Ascending aorta (tissue), 2 donors: ENCODE measurements at regions of chr3 and their contacts with region 1.

Region 1: GRCh38 chr3:113019182-113020137 is 28.7 kb downstream of the GTPBP8 start:
- DNase-seq: peak; percentile 51 to 95
- H3K4me3 ChIP-seq: peak overlapping the region; percentile 75 to 76
- H3K27ac ChIP-seq: peak overlapping the region; percentile 93 to 95
- H3K4me1 ChIP-seq: peaks cover 9 to 13% of the 10 kb centered on the region in 2 donors
- H3K27me3 ChIP-seq: no peaks in the 10 kb centered on the region
- CTCF ChIP-seq: no peak

Region 2: DNA sequence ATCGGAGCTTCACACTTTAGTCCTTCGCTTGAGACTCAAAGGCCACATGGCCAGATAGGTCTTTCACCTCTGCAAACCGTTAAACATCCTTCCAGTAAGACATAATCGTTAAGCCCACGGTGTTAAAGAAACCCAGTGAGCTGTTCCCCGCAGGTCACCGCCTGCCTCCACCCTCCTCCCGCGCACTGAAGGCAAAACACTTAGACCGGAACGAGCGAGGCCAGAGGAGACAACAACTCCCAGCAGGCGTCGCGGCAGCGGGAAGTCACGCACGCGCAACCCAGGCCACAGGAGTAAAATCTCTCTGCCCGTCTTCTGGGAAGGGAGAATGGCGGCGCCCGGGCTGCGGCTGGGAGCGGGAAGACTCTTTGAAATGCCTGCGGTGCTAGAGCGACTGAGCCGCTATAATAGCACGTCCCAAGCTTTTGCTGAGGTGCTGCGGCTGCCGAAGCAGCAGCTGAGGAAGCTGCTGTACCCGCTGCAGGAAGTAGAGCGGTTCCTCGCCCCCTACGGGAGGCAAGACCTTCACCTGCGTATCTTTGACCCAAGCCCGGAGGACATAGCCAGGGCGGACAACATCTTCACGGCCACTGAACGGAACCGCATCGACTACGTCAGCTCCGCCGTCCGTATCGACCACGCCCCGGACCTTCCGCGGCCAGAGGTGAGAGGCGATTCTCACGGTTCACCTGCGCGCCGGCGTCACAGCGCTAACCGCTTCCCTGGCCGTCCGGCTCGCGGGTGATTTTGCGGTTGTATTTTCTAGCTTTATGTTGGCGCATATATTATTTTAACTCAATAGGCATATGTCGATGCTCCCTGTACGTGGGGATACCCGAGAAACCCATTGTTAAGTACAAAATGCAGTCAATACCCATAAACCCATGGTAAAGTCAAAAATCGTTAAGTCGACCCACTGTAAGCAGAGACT is 28.5 kb before region 1 on chr3 and contains the start of gene GTPBP8:
- intact Hi-C with region 1: loop called (anchors 2 kb)
- DNase-seq: peak; percentile 58 to 94
- H3K4me3 ChIP-seq: peak within 1 kb of the TSS; percentile 70 to 91
- H3K27ac ChIP-seq: peak within 1 kb of the TSS; percentile 92 to 96
- H3K4me1 ChIP-seq: peaks cover 2 to 5% of the 10 kb centered on the region in 2 donors
- H3K27me3 ChIP-seq: no peaks in the 10 kb centered on the region
- CTCF ChIP-seq: peak in 1 of 3 experiments; percentile 11
- total RNA-seq, gene GTPBP8: 1.6 TPM

Region 3: DNA sequence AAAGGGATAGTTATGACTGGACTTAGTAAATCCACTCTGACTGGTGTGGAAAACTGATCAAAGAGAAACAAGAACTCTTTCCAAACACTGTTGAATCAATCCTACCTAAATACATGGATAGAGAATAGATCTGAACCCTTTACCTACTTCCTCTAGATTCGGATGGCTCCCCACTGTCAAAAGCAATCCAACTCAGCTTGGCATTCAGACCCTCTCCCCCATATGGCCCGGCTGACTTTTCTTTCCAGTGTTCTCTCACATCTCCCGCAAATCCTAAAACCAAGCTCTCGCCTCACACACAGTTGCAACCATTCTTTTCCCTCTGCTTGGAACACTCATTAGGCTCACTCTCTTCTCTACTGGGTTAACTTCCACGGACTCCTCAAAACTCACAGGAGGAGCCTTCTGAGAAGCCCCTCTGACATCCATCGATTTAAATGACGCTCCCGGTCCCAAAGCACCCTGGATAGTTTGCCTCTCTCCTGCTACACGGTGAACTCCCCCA is 494.9 kb after region 1 on chr3:
- intact Hi-C with region 1: loop called (anchors 2 kb)
- DNase-seq: no peak
- H3K4me3 ChIP-seq: peak overlapping the region; percentile 56 to 84
- H3K27ac ChIP-seq: peak overlapping the region; percentile 76 to 81
- H3K4me1 ChIP-seq: no peaks in the 10 kb centered on the region
- H3K27me3 ChIP-seq: no peaks in the 10 kb centered on the region
- CTCF ChIP-seq: no peak

Region 4: GRCh38 chr3:113947372-113948014 is 928.0 kb after region 1 on chr3 and contains the start of gene ZDHHC23:
- intact Hi-C with region 1: loop called (anchors 10 kb)
- DNase-seq: peak in 1 of 2 donors; percentile 85
- H3K4me3 ChIP-seq: peak within 1 kb of the TSS; percentile 70 to 82
- H3K27ac ChIP-seq: peak within 1 kb of the TSS; percentile 60 to 68
- H3K4me1 ChIP-seq: no peaks in the 10 kb centered on the region
- H3K27me3 ChIP-seq: no peaks in the 10 kb centered on the region
- CTCF ChIP-seq: no peak
- total RNA-seq, gene ZDHHC23: 4.4 TPM